ENCODE measurements at regions of chr11 and their contacts with region 1.

Region 1: DNA sequence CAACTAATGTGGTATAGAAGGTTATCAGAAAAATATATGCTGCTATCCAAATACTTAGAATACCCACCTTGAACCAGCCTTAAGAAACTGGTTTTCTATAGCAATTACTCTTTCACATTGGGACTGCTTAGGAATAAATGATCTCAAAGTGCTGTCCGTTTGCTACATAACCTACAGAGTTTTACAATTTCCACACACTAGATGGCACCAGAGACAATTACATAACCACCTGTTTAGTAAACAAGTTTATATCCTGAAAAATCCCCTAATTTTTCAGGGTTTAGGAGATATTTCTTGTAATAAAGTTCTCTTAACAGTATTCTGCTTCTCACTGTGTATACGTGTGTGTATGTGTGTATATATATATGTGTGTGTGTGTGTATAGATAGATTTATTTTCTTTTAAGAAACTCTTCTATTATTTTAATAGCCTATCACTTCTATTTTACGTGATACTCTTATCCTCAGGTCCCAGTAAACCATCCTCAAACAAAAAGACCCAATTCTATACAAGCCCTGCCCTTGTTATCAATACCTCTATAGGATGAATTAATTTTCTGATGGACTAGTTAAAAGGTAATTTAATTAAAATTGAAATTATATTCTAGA is 6.7 kb upstream of the OR5I1 start:
- DNase-seq: no peak
- ATAC-seq: no peak
- H3K4me3 ChIP-seq: no peak overlapping the region
- H3K27ac ChIP-seq: no peak overlapping the region
- H3K4me1 ChIP-seq: no peaks in the 10 kb centered on the region
- H3K27me3 ChIP-seq: no peaks in the 10 kb centered on the region
- CTCF ChIP-seq: no peak
- POLR2A ChIP-seq: no peak

Region 2: GRCh38 chr11:56027354-56027753 is 84.5 kb after region 1 on chr11 and contains the start of gene OR5AS1:
- in situ Hi-C with region 1: no loop called
- intact Hi-C with region 1: no loop called
- DNase-seq: no peak
- ATAC-seq: no peak
- H3K4me3 ChIP-seq: no peak within 1 kb of the TSS
- H3K27ac ChIP-seq: no peak within 1 kb of the TSS
- H3K4me1 ChIP-seq: no peaks in the 10 kb centered on the region
- H3K27me3 ChIP-seq: no peaks in the 10 kb centered on the region
- CTCF ChIP-seq: no peak
- POLR2A ChIP-seq: no peak
- total RNA-seq, gene OR5AS1: not detected

Region 3: GRCh38 chr11:56783448-56784041 is 840.7 kb after region 1 on chr11:
- in situ Hi-C with region 1: loop called in 1 of 4 experiments (anchors 25 kb)
- intact Hi-C with region 1: no loop called
- DNase-seq: no peak
- ATAC-seq: no peak
- H3K4me3 ChIP-seq: no peak overlapping the region
- H3K27ac ChIP-seq: no peak overlapping the region
- H3K4me1 ChIP-seq: no peaks in the 10 kb centered on the region
- H3K27me3 ChIP-seq: no peaks in the 10 kb centered on the region
- CTCF ChIP-seq: peak in 3 of 5 experiments; percentile 29 to 57 (median 35)
- POLR2A ChIP-seq: no peak